Calu3 (cell line): ENCODE measurements at regions of chr7 and their contacts with region 1.

Region 1: DNA sequence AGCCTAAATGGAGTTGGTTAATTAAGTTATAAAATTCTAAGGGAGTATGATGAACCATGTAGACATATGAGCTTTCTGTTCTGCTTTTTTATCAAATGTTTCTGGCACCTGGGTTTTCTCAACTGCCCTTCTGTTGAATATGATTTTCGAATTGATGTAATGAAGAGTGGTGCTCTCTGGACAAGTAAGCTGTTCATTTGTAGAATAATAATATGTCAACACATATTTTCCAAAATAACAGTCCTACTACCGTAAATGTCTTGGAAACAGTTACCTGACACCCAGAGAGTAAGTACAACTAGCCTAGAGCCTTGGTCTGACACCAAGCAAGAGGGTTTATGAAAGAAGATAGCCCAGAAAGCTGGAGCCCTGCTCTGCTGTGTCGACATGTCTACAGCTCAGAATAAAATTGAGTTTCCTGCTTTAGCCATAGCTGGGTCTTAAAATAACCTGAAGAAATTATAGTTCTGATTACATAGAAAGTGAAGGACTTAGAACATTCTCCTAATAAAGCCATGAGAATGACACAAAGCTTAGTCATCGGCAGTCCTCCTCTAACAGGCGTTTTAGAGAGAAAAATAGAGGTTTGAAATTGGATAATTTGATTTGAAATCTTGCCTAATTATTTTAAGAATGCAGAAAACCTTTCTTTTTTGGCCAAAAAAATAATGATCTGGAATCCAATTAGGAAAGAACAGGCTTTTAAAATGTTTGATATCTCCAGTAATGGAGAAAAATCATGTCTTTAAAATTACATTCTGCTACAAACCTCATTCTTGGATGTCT is 25.1 kb downstream of the HDAC9 start:
- DNase-seq: no peak
- H3K4me3 Mint-ChIP-seq: peak overlapping the region; percentile 38
- H3K27ac Mint-ChIP-seq: peak overlapping the region; percentile 85
- H3K4me1 Mint-ChIP-seq: peaks cover 69% of the 10 kb centered on the region
- H3K27me3 Mint-ChIP-seq: no peaks in the 10 kb centered on the region
- CTCF ChIP-seq: no peak

Region 2: GRCh38 chr7:18570890-18571478 is 50.3 kb after region 1 on chr7:
- CTCF ChIA-PET with region 1: interaction called, 3 read pairs
- intact Hi-C with region 1: loop called (anchors 2 kb)
- DNase-seq: peak; percentile 41
- H3K4me3 Mint-ChIP-seq: no peak overlapping the region
- H3K27ac Mint-ChIP-seq: peak overlapping the region; percentile 54
- H3K4me1 Mint-ChIP-seq: peaks cover 27% of the 10 kb centered on the region
- H3K27me3 Mint-ChIP-seq: no peaks in the 10 kb centered on the region
- CTCF ChIP-seq: peak; percentile 55

Region 3: GRCh38 chr7:18995811-18996426 is 475.3 kb after region 1 on chr7:
- CTCF ChIA-PET with region 1: no interaction called
- intact Hi-C with region 1: no loop called
- DNase-seq: no peak
- H3K4me3 Mint-ChIP-seq: no peak overlapping the region
- H3K27ac Mint-ChIP-seq: no peak overlapping the region
- H3K4me1 Mint-ChIP-seq: no peaks in the 10 kb centered on the region
- H3K27me3 Mint-ChIP-seq: no peaks in the 10 kb centered on the region
- CTCF ChIP-seq: no peak